ENCODE measurements at regions of chr17 and their contacts with region 1.

Region 1: DNA sequence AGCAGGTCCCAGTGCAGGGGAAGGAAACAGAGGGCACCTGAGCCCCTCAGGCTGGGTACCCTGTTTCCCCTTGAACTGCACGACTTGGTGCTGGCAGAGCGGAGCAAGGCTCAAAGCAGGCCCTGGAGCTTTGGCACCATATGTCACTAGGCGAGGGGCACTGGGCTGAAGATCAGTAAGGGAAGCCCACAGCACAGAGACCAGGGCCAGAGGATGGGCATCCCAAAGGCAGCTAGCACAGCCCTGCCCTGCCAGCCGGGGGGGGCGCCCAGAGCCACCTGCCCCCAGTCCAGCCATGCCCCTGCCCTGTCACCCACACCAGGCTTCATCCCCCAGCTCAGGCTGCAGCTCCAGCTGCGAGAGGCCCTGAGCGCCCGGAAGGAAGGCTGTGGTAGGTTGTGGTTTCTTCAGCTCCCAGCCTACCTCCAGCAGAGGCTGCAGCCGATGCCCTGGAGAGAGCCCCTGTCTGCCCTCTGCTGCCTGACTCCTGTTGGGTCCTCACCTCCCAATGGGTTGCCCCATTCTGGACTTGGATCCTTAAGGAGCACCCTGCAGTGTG is 10.9 kb downstream of the NHERF1 start:
- DNase-seq: peak; percentile 74
- H3K4me3 Mint-ChIP-seq: peak overlapping the region; percentile 71
- H3K27ac Mint-ChIP-seq: peak overlapping the region; percentile 80
- H3K4me1 Mint-ChIP-seq: peaks cover 70% of the 10 kb centered on the region
- H3K27me3 Mint-ChIP-seq: no peaks in the 10 kb centered on the region

Region 2: DNA sequence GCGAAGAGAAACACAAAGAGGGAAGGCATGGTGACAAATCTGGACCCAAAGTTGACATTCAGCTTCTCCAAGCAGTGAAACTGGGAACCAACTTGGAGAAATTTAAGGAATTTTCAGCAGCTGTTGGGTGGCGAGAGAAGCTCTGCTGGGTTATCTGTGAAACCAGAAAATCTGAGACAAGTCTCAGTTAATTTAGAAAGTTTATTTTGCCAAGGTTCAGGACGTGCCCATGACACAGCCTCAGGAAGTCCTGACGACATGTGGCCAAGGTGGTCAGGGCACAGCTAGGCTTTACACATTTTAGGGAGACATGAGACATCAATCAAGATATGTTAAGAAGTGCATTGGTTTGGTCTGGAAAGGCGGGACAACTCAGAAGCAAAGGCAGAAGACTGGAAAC is 35.4 kb before region 1 on chr17:
- CTCF ChIA-PET with region 1: no interaction called
- POLR2A ChIA-PET with region 1: no interaction called
- DNase-seq: no peak
- H3K4me3 Mint-ChIP-seq: no peak overlapping the region
- H3K27ac Mint-ChIP-seq: no peak overlapping the region
- H3K4me1 Mint-ChIP-seq: peaks cover 9% of the 10 kb centered on the region
- H3K27me3 Mint-ChIP-seq: peaks cover 25% of the 10 kb centered on the region

Region 3: GRCh38 chr17:74736513-74737298 is 22.6 kb before region 1 on chr17 and contains the start of gene RAB37:
- CTCF ChIA-PET with region 1: interaction called, 17 read pairs
- POLR2A ChIA-PET with region 1: no interaction called
- DNase-seq: peak; percentile 39
- H3K4me3 Mint-ChIP-seq: peak within 1 kb of the TSS; percentile 83
- H3K27ac Mint-ChIP-seq: peak within 1 kb of the TSS; percentile 91
- H3K4me1 Mint-ChIP-seq: peaks cover 55% of the 10 kb centered on the region
- H3K27me3 Mint-ChIP-seq: peaks cover 18% of the 10 kb centered on the region
- total RNA-seq, gene RAB37: 28.2 to 30.4 TPM

Region 4: GRCh38 chr17:74770498-74771318 is 11.4 kb after region 1 on chr17:
- CTCF ChIA-PET with region 1: interaction called, 26 read pairs
- POLR2A ChIA-PET with region 1: no interaction called
- DNase-seq: peak; percentile 74
- H3K4me3 Mint-ChIP-seq: no peak overlapping the region
- H3K27ac Mint-ChIP-seq: peak overlapping the region; percentile 61
- H3K4me1 Mint-ChIP-seq: peaks cover 47% of the 10 kb centered on the region
- H3K27me3 Mint-ChIP-seq: no peaks in the 10 kb centered on the region

Region 5: DNA sequence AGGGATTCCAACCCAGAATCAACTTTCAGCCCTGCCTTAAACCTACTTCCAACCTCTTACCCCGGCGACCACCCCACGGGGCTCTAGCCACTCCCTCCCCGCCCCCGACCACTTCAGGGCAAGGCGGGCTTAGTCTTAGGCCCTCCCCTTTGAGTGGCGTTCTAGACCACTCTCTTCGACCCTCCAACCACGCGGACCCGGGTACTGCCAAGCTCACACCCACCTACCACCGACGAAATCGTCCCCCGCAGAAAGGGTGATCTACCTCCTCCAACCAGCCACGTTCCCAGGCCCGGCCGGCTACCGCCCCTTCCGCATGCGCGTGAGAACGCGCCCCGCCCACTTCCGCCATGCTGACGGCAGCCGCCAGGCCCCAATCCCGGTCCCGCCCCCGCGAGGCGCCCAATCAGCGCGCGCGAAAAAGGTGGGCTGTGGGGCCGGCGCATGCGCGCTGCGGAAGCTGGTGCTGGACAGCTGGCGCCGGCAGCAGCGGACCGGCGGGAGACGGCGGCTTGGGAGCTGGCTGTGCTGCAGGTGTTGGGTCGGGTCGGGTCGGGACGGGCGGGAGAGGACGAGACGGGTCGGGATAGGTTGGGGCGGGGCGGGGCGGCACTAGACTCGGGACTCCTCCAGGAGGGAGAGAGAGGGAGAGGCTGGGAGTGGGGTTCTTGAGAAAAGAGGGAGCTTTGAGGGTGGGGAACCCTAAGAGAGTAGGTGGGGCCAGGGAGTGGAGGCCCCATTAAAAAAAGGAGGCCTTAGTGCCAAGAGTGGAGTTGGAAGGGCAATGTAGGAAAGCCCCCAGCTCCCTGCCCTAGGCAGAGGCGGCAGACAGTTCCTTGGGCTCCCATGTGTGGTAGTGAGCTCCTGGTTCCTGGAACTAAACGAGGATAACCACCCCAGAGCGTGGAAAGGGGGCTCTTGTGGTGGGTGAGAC is 17.0 kb after region 1 on chr17 and contains the start of gene NAT9:
- CTCF ChIA-PET with region 1: interaction called, 26 read pairs
- POLR2A ChIA-PET with region 1: no interaction called
- DNase-seq: peak; percentile 98
- H3K4me3 Mint-ChIP-seq: peak within 1 kb of the TSS; percentile 98
- H3K27ac Mint-ChIP-seq: peak within 1 kb of the TSS; percentile 90
- H3K4me1 Mint-ChIP-seq: peaks cover 74% of the 10 kb centered on the region
- H3K27me3 Mint-ChIP-seq: no peaks in the 10 kb centered on the region
- total RNA-seq, gene NAT9: 28.6 to 34.4 TPM